Activated CD8-positive, alpha-beta T cell treated with anti-CD3 and anti-CD28 coated beads for 36 hours (primary cell): ENCODE measurements at regions of chr19 and their contacts with region 1.

Region 1: GRCh38 chr19:20565321-20566018 is at the start of gene ZNF737:
- DNase-seq: peak; percentile 98
- ATAC-seq: peak; percentile 95
- H3K4me3 Mint-ChIP-seq: peak within 1 kb of the TSS; percentile 93
- H3K27ac Mint-ChIP-seq: peak within 1 kb of the TSS; percentile 97
- H3K4me1 Mint-ChIP-seq: peaks cover 23% of the 10 kb centered on the region
- H3K27me3 Mint-ChIP-seq: no peaks in the 10 kb centered on the region
- CTCF ChIP-seq: no peak
- total RNA-seq, gene ZNF737: 14.0 to 16.2 TPM

Region 2: GRCh38 chr19:20423381-20424197 is 141.9 kb before region 1 on chr19:
- CTCF ChIA-PET with region 1: interaction called, 5 read pairs
- POLR2A ChIA-PET with region 1: interaction called, 18 read pairs
- intact Hi-C with region 1: no loop called
- DNase-seq: peak; percentile 55
- ATAC-seq: no peak
- H3K4me3 Mint-ChIP-seq: peak overlapping the region; percentile 99
- H3K27ac Mint-ChIP-seq: peak overlapping the region; percentile 100
- H3K4me1 Mint-ChIP-seq: peaks cover 16% of the 10 kb centered on the region
- H3K27me3 Mint-ChIP-seq: no peaks in the 10 kb centered on the region
- CTCF ChIP-seq: no peak

Region 3: GRCh38 chr19:20661150-20661819 is 95.8 kb after region 1 on chr19 and contains the start of gene ZNF626:
- CTCF ChIA-PET with region 1: no interaction called
- POLR2A ChIA-PET with region 1: interaction called, 17 read pairs
- intact Hi-C with region 1: no loop called
- DNase-seq: peak; percentile 98
- ATAC-seq: peak; percentile 99
- H3K4me3 Mint-ChIP-seq: peak within 1 kb of the TSS; percentile 90
- H3K27ac Mint-ChIP-seq: peak within 1 kb of the TSS; percentile 92
- H3K4me1 Mint-ChIP-seq: peaks cover 31% of the 10 kb centered on the region
- H3K27me3 Mint-ChIP-seq: no peaks in the 10 kb centered on the region
- CTCF ChIP-seq: no peak
- total RNA-seq, gene ZNF626: 9.3 to 11.1 TPM

Region 4: DNA sequence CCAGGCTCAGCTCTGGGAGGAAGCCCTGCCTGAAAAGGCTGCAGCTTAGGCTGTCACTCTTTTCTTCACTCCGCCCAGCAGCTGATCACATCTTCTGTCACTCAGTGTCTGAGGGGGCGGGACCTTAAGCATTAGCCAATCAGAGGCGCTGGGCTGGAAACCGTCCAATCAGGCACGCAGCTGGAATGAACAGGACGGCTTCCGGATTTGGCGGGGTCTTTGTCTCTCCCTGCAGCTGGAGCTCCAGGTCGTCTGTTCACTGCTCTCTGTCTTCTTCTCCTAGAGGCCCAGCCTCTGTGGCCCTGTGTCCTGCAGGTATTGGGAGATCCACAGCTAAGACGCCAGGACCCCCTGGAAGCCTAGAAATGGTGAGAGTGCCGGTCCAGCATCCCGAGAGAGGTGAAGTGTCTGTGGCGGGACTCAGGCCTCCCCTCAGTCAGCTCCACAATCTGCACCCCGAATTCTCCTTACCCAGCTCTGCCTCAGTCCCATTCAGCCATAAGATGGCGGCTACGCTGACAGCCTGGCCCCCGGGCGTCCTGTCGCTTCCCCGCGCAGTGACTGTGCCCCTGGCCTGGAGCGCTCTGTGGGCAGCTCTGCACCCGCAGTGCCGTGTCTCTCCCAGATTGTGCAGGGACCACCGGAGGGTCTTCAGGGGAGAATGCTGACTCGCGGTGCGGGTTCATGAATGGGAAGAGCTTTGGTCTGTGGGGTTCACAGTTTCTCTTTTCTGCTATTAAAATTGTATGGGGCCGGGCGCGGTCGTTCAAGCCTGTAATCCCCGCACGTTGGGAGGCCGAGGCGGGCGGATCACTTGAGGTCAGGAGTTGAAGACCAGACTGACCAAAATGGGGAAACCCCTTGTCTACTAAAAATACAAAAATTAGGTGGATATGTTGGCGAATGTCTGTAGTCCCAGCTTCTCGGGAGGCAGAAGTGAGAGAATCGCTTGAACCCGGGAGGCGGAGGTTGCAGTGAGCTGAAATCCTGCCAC is 210.9 kb after region 1 on chr19 and contains the start of gene ZNF66:
- CTCF ChIA-PET with region 1: no interaction called
- POLR2A ChIA-PET with region 1: interaction called, 11 read pairs
- intact Hi-C with region 1: loop called (anchors 5 kb)
- DNase-seq: peak; percentile 98
- ATAC-seq: peak; percentile 98
- H3K4me3 Mint-ChIP-seq: peak within 1 kb of the TSS; percentile 100
- H3K27ac Mint-ChIP-seq: peak within 1 kb of the TSS; percentile 98
- H3K4me1 Mint-ChIP-seq: peaks cover 26% of the 10 kb centered on the region
- H3K27me3 Mint-ChIP-seq: no peaks in the 10 kb centered on the region
- CTCF ChIP-seq: no peak
- total RNA-seq, gene ZNF66: 8.9 to 9.3 TPM

Region 5: GRCh38 chr19:21065336-21065735 is 499.9 kb after region 1 on chr19:
- CTCF ChIA-PET with region 1: no interaction called
- POLR2A ChIA-PET with region 1: no interaction called
- intact Hi-C with region 1: no loop called
- DNase-seq: no peak
- ATAC-seq: no peak
- H3K4me3 Mint-ChIP-seq: no peak overlapping the region
- H3K27ac Mint-ChIP-seq: no peak overlapping the region
- H3K4me1 Mint-ChIP-seq: no peaks in the 10 kb centered on the region
- H3K27me3 Mint-ChIP-seq: no peaks in the 10 kb centered on the region
- CTCF ChIP-seq: no peak